Activated naive CD4-positive, alpha-beta T cell treated with anti-CD3 and anti-CD28 coated beads for 36 hours (primary cell): ENCODE measurements at regions of chr5 and their contacts with region 1.

Region 1: GRCh38 chr5:39164529-39165402 is 54.6 kb downstream of the FYB1 start:
- DNase-seq: peak; percentile 51
- H3K4me3 Mint-ChIP-seq: peak overlapping the region; percentile 74
- H3K27ac Mint-ChIP-seq: peak overlapping the region; percentile 96
- H3K4me1 Mint-ChIP-seq: peaks cover 86% of the 10 kb centered on the region
- H3K27me3 Mint-ChIP-seq: no peaks in the 10 kb centered on the region

Region 2: GRCh38 chr5:39092581-39093350 is 72.0 kb before region 1 on chr5:
- CTCF ChIA-PET with region 1: no interaction called
- intact Hi-C with region 1: no loop called
- DNase-seq: no peak
- H3K4me3 Mint-ChIP-seq: no peak overlapping the region
- H3K27ac Mint-ChIP-seq: no peak overlapping the region
- H3K4me1 Mint-ChIP-seq: peaks cover 4% of the 10 kb centered on the region
- H3K27me3 Mint-ChIP-seq: peaks cover 1% of the 10 kb centered on the region

Region 3: GRCh38 chr5:39194466-39195136 is 29.8 kb after region 1 on chr5:
- CTCF ChIA-PET with region 1: interaction called, 10 read pairs
- intact Hi-C with region 1: loop called (anchors 1 kb)
- DNase-seq: no peak
- H3K4me3 Mint-ChIP-seq: peak overlapping the region; percentile 76
- H3K27ac Mint-ChIP-seq: peak overlapping the region; percentile 93
- H3K4me1 Mint-ChIP-seq: peaks cover 62% of the 10 kb centered on the region
- H3K27me3 Mint-ChIP-seq: no peaks in the 10 kb centered on the region

Region 4: DNA sequence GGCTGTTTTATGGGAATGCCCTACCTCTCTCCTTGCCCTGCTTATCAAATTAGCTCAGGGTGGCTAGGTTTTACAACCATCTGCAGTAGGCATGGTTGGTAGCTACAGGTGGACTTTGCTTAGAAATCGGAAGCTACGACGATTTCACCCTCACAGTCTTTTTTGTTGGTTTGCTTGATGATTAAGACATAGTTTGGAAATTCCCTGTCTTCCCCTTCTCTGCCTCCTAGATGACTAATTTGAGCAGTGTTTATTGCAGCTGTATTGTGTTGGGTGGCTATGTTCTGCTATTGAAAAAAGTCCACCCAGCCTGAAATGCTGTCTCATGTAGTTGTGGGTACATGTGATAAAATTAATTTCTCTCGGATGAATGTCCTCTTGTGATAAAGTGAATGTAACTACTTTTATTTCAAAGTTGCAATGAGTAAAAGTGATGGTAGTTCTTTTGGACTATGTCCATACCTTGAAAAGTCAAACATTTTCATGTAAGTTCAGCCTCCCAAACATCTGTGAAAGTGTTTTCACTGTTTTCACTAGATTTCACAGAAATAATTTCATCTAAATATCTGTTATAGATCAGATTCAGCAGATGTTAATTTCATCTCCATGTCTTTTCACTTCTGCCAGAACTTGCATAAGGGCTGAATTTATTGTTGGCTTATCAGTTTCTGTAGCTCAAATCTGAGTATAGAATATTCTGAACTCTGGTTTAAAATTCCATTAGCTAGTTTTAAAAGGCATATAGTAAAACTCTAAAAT is 91.9 kb after region 1 on chr5:
- CTCF ChIA-PET with region 1: no interaction called
- intact Hi-C with region 1: no loop called
- DNase-seq: peak; percentile 20
- H3K4me3 Mint-ChIP-seq: no peak overlapping the region
- H3K27ac Mint-ChIP-seq: no peak overlapping the region
- H3K4me1 Mint-ChIP-seq: peaks cover 16% of the 10 kb centered on the region
- H3K27me3 Mint-ChIP-seq: no peaks in the 10 kb centered on the region

Region 5: GRCh38 chr5:39555788-39556187 is 391.0 kb after region 1 on chr5:
- CTCF ChIA-PET with region 1: no interaction called
- intact Hi-C with region 1: no loop called
- DNase-seq: no peak
- H3K4me3 Mint-ChIP-seq: no peak overlapping the region
- H3K27ac Mint-ChIP-seq: no peak overlapping the region
- H3K4me1 Mint-ChIP-seq: no peaks in the 10 kb centered on the region
- H3K27me3 Mint-ChIP-seq: peaks cover 4% of the 10 kb centered on the region